Activated CD4-positive, alpha-beta memory T cell treated with anti-CD3 and anti-CD28 coated beads, Interleukin-2, amount 10 ng/mL, durations not matched to agents 7 days and 5 days (primary cell): ENCODE measurements at regions of chr3 and their contacts with region 1.

Region 1: DNA sequence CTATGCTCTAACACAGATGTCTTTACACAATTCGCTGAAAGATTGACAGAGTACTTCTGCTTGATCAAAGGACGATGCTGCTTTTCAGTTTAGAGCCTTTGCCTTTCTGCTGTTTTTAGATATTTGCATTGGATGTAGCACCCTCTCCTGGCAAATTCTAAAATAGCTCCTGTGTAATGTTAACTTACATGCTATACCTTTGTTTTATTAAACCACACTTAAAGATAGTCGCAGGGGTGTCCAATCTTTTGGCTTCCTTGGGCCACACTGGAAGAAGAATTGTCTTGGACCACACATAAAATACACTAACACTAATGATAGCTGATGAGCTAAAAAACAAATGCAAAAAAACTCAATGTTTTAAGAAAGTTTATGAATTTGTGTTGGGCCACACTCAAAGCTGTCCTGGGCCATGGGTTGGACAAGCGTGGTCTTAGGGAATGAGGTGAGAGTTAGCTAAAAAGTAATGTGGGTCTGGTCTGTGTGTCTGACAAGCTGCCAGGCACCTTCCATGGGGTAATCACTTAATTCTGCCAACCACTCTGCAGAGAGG is 62.9 kb downstream of the ATG7 start:
- DNase-seq: no peak
- H3K4me3 Mint-ChIP-seq: no peak overlapping the region
- H3K27ac Mint-ChIP-seq: no peak overlapping the region
- H3K4me1 Mint-ChIP-seq: peaks cover 12% of the 10 kb centered on the region
- H3K27me3 Mint-ChIP-seq: no peaks in the 10 kb centered on the region

Region 2: GRCh38 chr3:11060500-11061251 is 274.5 kb before region 1 on chr3:
- CTCF ChIA-PET with region 1: interaction called, 28 read pairs
- POLR2A ChIA-PET with region 1: no interaction called
- DNase-seq: peak; percentile 46
- H3K4me3 Mint-ChIP-seq: no peak overlapping the region
- H3K27ac Mint-ChIP-seq: no peak overlapping the region
- H3K4me1 Mint-ChIP-seq: peaks cover 3% of the 10 kb centered on the region
- H3K27me3 Mint-ChIP-seq: peaks cover 7% of the 10 kb centered on the region

Region 3: GRCh38 chr3:11236595-11237461 is 98.3 kb before region 1 on chr3:
- CTCF ChIA-PET with region 1: interaction called, 38 read pairs
- POLR2A ChIA-PET with region 1: interaction called, 10 read pairs
- DNase-seq: peak; percentile 79
- H3K4me3 Mint-ChIP-seq: no peak overlapping the region
- H3K27ac Mint-ChIP-seq: no peak overlapping the region
- H3K4me1 Mint-ChIP-seq: peaks cover 30% of the 10 kb centered on the region
- H3K27me3 Mint-ChIP-seq: peaks cover 23% of the 10 kb centered on the region

Region 4: GRCh38 chr3:11312166-11312565 is 23.0 kb before region 1 on chr3:
- CTCF ChIA-PET with region 1: interaction called, 10 read pairs
- POLR2A ChIA-PET with region 1: no interaction called
- DNase-seq: no peak
- H3K4me3 Mint-ChIP-seq: no peak overlapping the region
- H3K27ac Mint-ChIP-seq: no peak overlapping the region
- H3K4me1 Mint-ChIP-seq: peaks cover 11% of the 10 kb centered on the region
- H3K27me3 Mint-ChIP-seq: no peaks in the 10 kb centered on the region

Region 5: GRCh38 chr3:11548721-11549131 is 213.6 kb after region 1 on chr3:
- CTCF ChIA-PET with region 1: no interaction called
- POLR2A ChIA-PET with region 1: no interaction called
- DNase-seq: no peak
- H3K4me3 Mint-ChIP-seq: no peak overlapping the region
- H3K27ac Mint-ChIP-seq: no peak overlapping the region
- H3K4me1 Mint-ChIP-seq: no peaks in the 10 kb centered on the region
- H3K27me3 Mint-ChIP-seq: no peaks in the 10 kb centered on the region

Region 6: DNA sequence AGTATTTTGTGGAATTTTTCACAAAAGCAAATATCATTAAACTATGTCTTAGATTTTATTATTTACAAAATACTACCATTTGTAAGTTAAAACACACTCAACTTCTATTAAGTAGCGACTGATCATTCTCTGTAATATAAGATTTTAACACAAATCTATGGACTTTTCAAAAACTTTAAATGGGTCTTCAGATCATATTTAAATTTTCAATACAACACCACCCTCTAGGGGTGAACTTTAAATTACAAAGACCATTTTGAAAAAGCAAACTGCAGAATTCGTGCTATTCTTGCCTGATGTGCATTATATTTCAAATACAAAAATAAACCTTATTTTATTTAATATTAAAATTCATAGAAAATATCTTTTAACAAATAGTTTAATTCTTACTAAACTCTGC is 316.8 kb after region 1 on chr3:
- CTCF ChIA-PET with region 1: interaction called, 14 read pairs
- POLR2A ChIA-PET with region 1: no interaction called
- DNase-seq: no peak
- H3K4me3 Mint-ChIP-seq: no peak overlapping the region
- H3K27ac Mint-ChIP-seq: no peak overlapping the region
- H3K4me1 Mint-ChIP-seq: no peaks in the 10 kb centered on the region
- H3K27me3 Mint-ChIP-seq: peaks cover 2% of the 10 kb centered on the region